Psoas muscle (tissue), 8 donors: ENCODE measurements at regions of chr12 and their contacts with region 1.

Region 1: DNA sequence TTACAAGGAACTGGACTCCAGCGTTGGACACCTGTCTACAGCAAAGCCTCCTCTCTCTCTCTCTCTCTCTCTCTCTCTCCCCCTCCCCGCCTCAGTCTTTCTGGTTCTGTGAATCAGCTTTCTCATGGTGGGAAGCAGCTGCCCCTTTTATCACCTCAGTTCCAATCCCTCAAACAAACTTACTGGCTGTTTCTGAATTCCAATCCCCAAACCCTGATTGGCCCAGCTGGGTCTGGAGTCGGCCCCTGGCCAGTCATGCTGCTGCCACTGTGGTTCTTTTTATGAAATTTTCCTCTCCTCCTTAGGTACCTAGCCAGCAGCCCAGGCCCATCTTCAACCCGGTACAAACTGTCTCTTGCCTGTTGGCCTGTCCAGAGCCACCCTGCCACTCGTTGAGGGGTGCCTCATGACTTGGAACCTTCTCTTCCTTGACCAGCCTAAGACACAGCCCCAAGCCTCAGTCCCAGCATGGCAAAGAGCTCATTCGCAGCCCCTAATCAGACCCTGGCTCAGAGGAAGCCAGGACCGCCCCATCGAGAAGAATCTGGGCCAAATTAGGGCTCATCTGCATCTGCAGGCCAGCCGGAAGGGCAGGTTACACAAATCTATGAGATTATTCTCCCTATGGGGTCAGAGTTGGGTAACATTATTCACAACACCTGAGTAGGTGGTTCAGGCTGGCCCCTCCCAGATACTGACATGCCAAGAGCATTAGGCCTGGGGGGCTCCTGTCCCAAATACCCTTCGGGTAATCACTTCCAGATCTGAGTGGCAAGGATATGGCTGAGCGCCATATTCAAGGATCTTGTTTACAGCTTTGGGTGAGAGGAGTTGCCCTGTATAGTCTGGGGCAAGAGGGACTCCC is 9.5 kb upstream of the MORN3 start:
- DNase-seq: no peak
- ATAC-seq: no peak
- H3K4me3 ChIP-seq: no peak overlapping the region
- H3K27ac ChIP-seq: no peak overlapping the region
- H3K4me1 ChIP-seq: no peaks in the 10 kb centered on the region
- H3K27me3 ChIP-seq: no peaks in the 10 kb centered on the region
- CTCF ChIP-seq: no peak

Region 2: DNA sequence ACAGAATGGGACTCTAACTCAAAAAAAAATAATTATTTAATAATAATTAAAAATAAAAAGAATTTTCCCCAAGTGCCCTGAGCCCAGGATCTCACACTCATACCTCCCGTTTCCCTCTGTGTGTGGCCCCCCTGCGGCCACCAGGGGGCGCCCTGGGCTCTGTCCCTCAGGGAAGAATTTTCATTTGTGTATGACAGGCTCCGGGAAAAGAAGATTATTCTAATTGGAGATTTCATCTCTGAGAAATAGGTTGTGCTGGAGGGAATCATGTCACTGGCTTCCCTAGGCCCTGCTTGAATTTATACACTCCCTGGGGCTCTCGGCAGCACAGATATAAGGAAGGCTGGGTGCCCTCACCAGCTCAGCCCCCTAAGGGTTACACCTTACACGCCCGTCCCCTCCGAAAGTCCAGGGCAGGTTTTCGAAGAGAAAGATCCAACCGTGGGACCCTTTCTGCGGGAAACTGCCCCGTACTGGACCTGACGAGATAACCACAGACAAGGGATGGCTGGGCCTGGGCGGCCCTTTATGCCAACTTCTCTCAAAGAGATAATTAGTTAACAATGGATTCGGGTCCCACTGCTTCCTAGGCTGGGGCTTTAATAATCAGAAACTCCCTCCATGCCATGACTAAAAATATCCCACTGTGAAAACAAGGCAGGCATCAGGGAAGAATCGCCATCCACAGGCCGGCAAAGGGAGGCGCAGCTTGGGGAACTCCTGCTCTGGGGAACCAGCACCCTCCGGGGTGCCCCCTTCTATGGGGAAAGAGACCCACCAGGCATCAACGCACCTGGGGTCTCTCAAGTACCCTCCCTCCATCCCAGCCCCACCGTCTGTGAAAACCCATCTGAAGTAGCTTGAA is 178.8 kb before region 1 on chr12:
- intact Hi-C with region 1: loop called (anchors 5 kb)
- DNase-seq: peak; percentile 81 to 87
- ATAC-seq: peak; percentile 86 to 92 (median 90)
- H3K4me3 ChIP-seq: peak overlapping the region; percentile 54
- H3K27ac ChIP-seq: peak overlapping the region; percentile 70
- H3K4me1 ChIP-seq: peaks cover 13% of the 10 kb centered on the region
- H3K27me3 ChIP-seq: no peaks in the 10 kb centered on the region
- CTCF ChIP-seq: peak; percentile 99

Region 3: DNA sequence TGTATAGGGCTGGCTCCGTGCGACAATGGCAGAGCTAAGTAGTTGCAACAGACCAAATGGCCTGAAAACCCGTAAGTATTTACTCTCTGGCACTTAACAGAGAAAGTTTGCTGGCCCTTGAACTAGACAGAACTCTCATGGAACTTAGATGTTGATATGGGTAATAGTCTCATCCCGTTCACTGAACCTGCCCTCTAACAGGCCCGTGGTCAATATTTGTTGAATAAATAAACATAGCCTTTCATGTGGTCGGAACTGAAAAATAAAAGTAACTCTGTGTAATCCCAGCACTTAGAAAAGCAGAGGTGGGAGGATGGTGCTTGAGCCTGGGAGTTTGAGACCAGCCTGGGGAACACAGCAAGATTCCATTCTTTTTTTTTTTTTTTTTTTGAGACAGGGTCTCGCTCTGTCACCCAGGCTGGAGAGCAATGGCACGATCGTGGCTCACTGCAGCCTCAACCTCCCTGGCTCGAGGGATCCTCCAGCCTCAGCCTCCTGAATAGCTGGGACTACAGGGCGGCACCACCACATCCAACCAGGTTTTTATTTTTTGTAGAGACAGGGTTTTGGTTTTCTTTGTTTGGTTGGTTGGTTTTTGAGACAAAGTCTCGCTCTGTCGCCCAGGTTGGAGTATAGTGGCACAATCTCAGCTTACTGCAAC is 127.8 kb before region 1 on chr12:
- intact Hi-C with region 1: loop called (anchors 1 to 5 kb)
- DNase-seq: no peak
- ATAC-seq: no peak
- H3K4me3 ChIP-seq: no peak overlapping the region
- H3K27ac ChIP-seq: no peak overlapping the region
- H3K4me1 ChIP-seq: no peaks in the 10 kb centered on the region
- H3K27me3 ChIP-seq: no peaks in the 10 kb centered on the region
- CTCF ChIP-seq: no peak

Region 4: GRCh38 chr12:121626087-121626852 is 52.7 kb before region 1 on chr12 and contains the start of gene ORAI1:
- intact Hi-C with region 1: loop called (anchors 5 kb)
- DNase-seq: peak; percentile 98 to 99
- ATAC-seq: peak; percentile 88 to 94 (median 90)
- H3K4me3 ChIP-seq: peak within 1 kb of the TSS; percentile 87
- H3K27ac ChIP-seq: peak within 1 kb of the TSS; percentile 96
- H3K4me1 ChIP-seq: peaks cover 44% of the 10 kb centered on the region
- H3K27me3 ChIP-seq: no peaks in the 10 kb centered on the region
- CTCF ChIP-seq: peak; percentile 25
- total RNA-seq, gene ORAI1: 17.9 to 34.2 (median 30.2) TPM

Region 5: GRCh38 chr12:121637231-121637914 is 41.6 kb before region 1 on chr12:
- intact Hi-C with region 1: loop called in 1 of 2 experiments (anchors 5 kb)
- DNase-seq: peak in 1 of 2 donors; percentile 66
- ATAC-seq: peak; percentile 50 to 58 (median 54)
- H3K4me3 ChIP-seq: no peak overlapping the region
- H3K27ac ChIP-seq: peak overlapping the region; percentile 60
- H3K4me1 ChIP-seq: peaks cover 19% of the 10 kb centered on the region
- H3K27me3 ChIP-seq: no peaks in the 10 kb centered on the region
- CTCF ChIP-seq: no peak

Region 6: DNA sequence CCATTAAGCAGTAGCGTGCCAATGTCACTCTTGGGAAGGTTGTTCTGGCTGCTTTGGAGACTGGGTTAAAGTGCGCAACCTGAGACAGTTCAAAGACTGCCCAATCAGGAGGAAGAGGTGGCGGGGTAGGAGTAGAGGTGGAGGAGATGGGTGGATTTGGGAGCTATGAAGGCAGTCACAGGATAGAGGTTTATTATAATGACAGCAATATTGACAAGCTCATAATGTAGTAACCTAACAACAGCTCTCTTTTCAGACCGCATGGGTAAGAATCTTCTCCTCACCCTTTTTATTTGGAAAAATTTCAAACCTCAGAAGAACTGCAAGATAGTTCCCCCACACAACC is 204.3 kb after region 1 on chr12:
- intact Hi-C with region 1: no loop called
- DNase-seq: no peak
- ATAC-seq: peak in 1 of 4 donors; percentile 33
- H3K4me3 ChIP-seq: no peak overlapping the region
- H3K27ac ChIP-seq: no peak overlapping the region
- H3K4me1 ChIP-seq: no peaks in the 10 kb centered on the region
- H3K27me3 ChIP-seq: no peaks in the 10 kb centered on the region
- CTCF ChIP-seq: no peak